PC-9 (cell line): ENCODE measurements at regions of chr3 and their contacts with region 1.

Region 1: GRCh38 chr3:194141415-194142155 is 5.6 kb downstream of the HES1 start:
- DNase-seq: peak; percentile 97
- H3K4me3 ChIP-seq: peak overlapping the region; percentile 46; the same call in 1 of the 2 replicates
- H3K27ac ChIP-seq: peak overlapping the region; percentile 99
- H3K4me1 ChIP-seq: peaks cover 65% of the 10 kb centered on the region
- H3K27me3 ChIP-seq: no peaks in the 10 kb centered on the region
- CTCF ChIP-seq: 0 out of 2 replicates have a peak, but pooled peaks have one; percentile 37

Region 2: DNA sequence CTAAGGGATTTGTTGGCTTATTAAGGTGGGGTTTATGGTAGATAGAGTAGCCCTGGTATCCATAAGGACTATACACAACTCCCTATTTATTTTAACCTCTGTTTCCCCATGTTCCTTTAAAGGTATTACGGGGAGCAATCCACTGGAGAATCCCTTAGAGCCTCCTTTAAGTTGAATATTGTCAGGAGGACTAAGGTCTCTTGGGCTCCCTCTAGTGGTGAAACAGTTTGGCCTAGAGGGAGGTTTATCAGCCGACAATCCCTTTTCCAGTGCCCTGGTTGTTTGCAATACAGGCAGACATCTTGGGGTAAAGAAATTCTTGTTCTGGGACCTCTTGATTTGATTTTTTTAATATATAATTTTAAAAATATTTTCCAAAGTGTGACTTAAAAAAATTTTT is 535.7 kb before region 1 on chr3:
- CTCF ChIA-PET with region 1: no interaction called
- POLR2A ChIA-PET with region 1: interaction called, 26 read pairs
- intact Hi-C with region 1: loop called (anchors 5 kb)
- DNase-seq: peak; percentile 46 to 58
- H3K4me3 ChIP-seq: no peak overlapping the region
- H3K27ac ChIP-seq: no peak overlapping the region
- H3K4me1 ChIP-seq: no peaks in the 10 kb centered on the region
- H3K27me3 ChIP-seq: no peaks in the 10 kb centered on the region
- CTCF ChIP-seq: peak; percentile 96

Region 3: GRCh38 chr3:193946945-193947344 is 194.6 kb before region 1 on chr3:
- CTCF ChIA-PET with region 1: no interaction called
- POLR2A ChIA-PET with region 1: interaction called, 14 read pairs
- intact Hi-C with region 1: loop called (anchors 1 kb)
- DNase-seq: peak; percentile 83 to 87
- H3K4me3 ChIP-seq: no peak overlapping the region
- H3K27ac ChIP-seq: no peak overlapping the region
- H3K4me1 ChIP-seq: peaks cover 16% of the 10 kb centered on the region
- H3K27me3 ChIP-seq: no peaks in the 10 kb centered on the region
- CTCF ChIP-seq: no peak

Region 4: GRCh38 chr3:194166682-194167479 is 25.3 kb after region 1 on chr3:
- CTCF ChIA-PET with region 1: interaction called, 8 read pairs
- POLR2A ChIA-PET with region 1: interaction called, 18 read pairs
- intact Hi-C with region 1: no loop called
- DNase-seq: no peak
- H3K4me3 ChIP-seq: no peak overlapping the region
- H3K27ac ChIP-seq: no peak overlapping the region
- H3K4me1 ChIP-seq: peaks cover 14% of the 10 kb centered on the region
- H3K27me3 ChIP-seq: no peaks in the 10 kb centered on the region
- CTCF ChIP-seq: no peak

Region 5: DNA sequence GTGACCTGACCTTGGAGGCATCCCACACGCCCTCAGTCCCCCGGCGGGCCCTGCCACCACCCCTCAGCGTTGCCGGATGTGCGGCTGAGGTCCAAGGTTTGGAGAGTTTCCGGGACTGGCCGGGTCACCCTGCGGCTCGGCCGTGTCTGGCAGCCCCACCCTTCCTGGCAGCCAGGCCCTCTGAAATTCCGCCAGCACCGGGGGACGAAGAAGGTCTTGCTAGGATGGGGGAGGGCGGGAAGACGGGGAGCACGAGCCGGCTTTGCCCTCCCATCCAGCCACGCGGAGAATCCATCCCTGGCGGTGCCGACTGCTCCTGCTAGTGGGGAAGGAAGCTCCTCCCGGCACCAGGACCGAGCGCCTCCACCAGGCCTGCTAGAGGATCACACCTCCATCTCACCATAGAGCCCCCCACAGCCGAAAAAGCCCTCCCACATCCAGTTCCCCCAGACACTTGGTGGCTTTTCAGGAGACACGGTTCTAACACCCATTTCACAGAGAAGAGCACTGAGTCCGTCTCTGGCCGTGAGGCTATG is 128.1 kb after region 1 on chr3:
- CTCF ChIA-PET with region 1: interaction called, 6 read pairs
- POLR2A ChIA-PET with region 1: interaction called, 31 read pairs
- intact Hi-C with region 1: loop called (anchors 1 kb)
- DNase-seq: peak; percentile 82 to 88
- H3K4me3 ChIP-seq: peak overlapping the region; percentile 38; the same call in 1 of the 2 replicates
- H3K27ac ChIP-seq: peak overlapping the region; percentile 91
- H3K4me1 ChIP-seq: peaks cover 72% of the 10 kb centered on the region
- H3K27me3 ChIP-seq: no peaks in the 10 kb centered on the region
- CTCF ChIP-seq: peak; percentile 76

Region 6: GRCh38 chr3:194315088-194315964 is 173.7 kb after region 1 on chr3:
- CTCF ChIA-PET with region 1: interaction called, 18 read pairs
- POLR2A ChIA-PET with region 1: interaction called, 8 read pairs
- intact Hi-C with region 1: loop called (anchors 1 kb)
- DNase-seq: peak; percentile 91 to 97
- H3K4me3 ChIP-seq: peak overlapping the region; percentile 51
- H3K27ac ChIP-seq: peak overlapping the region; percentile 75
- H3K4me1 ChIP-seq: peaks cover 27% of the 10 kb centered on the region
- H3K27me3 ChIP-seq: no peaks in the 10 kb centered on the region
- CTCF ChIP-seq: peak; percentile 99